BJ (cell line): ENCODE measurements at regions of chr13 and their contacts with region 1.

Region 1: DNA sequence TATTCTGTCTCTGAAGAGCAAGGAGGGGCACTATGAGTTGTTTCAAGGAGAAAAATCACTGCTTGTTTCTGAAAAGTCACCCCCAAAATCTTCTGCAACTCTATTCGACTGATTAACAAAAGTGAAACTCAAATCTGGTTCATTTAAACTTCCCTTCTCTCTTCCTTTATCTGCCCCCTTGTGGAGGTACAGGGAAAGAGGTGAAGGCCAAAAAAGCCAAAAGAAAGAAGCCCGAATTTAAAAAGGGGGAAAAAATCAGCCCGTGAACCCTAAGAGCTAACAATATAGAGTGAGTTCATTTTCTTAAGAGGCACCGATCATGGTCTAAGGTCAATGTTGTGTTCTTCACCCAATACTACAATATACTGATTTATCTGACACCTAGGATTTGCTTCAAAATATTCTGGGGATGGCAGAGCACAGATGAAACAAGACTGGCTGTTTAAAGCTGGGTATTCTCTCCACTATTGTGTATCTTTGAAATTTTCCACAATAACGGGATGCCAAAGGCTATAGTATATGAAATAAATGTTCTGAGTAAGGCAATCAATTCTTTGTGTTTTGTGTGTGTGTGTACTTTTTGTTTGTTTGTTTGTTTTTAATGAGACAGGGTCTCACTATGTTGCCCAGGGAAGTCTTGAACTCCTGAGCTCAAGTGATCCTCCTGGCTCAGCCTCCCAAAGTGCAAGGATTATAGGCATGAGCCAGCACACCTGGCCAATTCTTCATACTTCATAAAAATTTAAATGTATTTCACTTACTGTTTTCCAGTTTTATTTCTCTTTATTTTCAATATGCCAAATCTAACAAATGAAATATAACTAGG is 55.0 kb upstream of the EEF1AKMT1 start:
- DNase-seq: no peak
- H3K4me3 ChIP-seq: no peak overlapping the region
- H3K27me3 ChIP-seq: no peaks in the 10 kb centered on the region
- CTCF ChIP-seq: peak; percentile 79

Region 2: GRCh38 chr13:20495082-20496023 is 333.4 kb before region 1 on chr13:
- CTCF ChIA-PET with region 1: interaction called, 67 read pairs
- POLR2A ChIA-PET with region 1: no interaction called
- DNase-seq: no peak
- H3K4me3 ChIP-seq: no peak overlapping the region
- H3K27me3 ChIP-seq: no peaks in the 10 kb centered on the region
- CTCF ChIP-seq: peak; percentile 93

Region 3: GRCh38 chr13:20713751-20714150 is 115.0 kb before region 1 on chr13:
- CTCF ChIA-PET with region 1: interaction called, 26 read pairs
- POLR2A ChIA-PET with region 1: no interaction called
- DNase-seq: peak; percentile 18
- H3K4me3 ChIP-seq: no peak overlapping the region
- H3K27me3 ChIP-seq: peaks cover 1% of the 10 kb centered on the region; the same call in 1 of the 2 replicates
- CTCF ChIP-seq: no peak

Region 4: GRCh38 chr13:20814224-20814910 is 14.4 kb before region 1 on chr13:
- CTCF ChIA-PET with region 1: interaction called, 20 read pairs
- POLR2A ChIA-PET with region 1: no interaction called
- DNase-seq: peak; percentile 74
- H3K4me3 ChIP-seq: no peak overlapping the region
- H3K27me3 ChIP-seq: no peaks in the 10 kb centered on the region
- CTCF ChIP-seq: no peak

Region 5: GRCh38 chr13:20843166-20843565 is 14.4 kb after region 1 on chr13:
- CTCF ChIA-PET with region 1: interaction called, 20 read pairs
- POLR2A ChIA-PET with region 1: no interaction called
- DNase-seq: no peak
- H3K4me3 ChIP-seq: no peak overlapping the region
- H3K27me3 ChIP-seq: no peaks in the 10 kb centered on the region
- CTCF ChIP-seq: no peak

Region 6: GRCh38 chr13:20860844-20861243 is 32.1 kb after region 1 on chr13:
- CTCF ChIA-PET with region 1: interaction called, 11 read pairs
- POLR2A ChIA-PET with region 1: no interaction called
- DNase-seq: no peak
- H3K4me3 ChIP-seq: no peak overlapping the region
- H3K27me3 ChIP-seq: no peaks in the 10 kb centered on the region
- CTCF ChIP-seq: no peak